GM12878 (cell line): ENCODE measurements at regions of chr2 and their contacts with region 1.

Region 1: GRCh38 chr2:136378712-136379595 is 261.0 kb upstream of the CXCR4 start:
- DNase-seq: no peak
- ATAC-seq: peak; percentile 55
- H3K4me3 ChIP-seq: no peak overlapping the region
- H3K27ac ChIP-seq: no peak overlapping the region
- H3K4me1 ChIP-seq: peaks cover 51% of the 10 kb centered on the region
- H3K27me3 ChIP-seq: no peaks in the 10 kb centered on the region
- CTCF ChIP-seq: peak; percentile 85 to 92 (median 86)
- EP300 ChIP-seq: no peak
- POLR2A ChIP-seq: no peak
- RAD21 ChIP-seq: peak; percentile 96

Region 2: GRCh38 chr2:135311268-135311667 is 1067.7 kb before region 1 on chr2:
- CTCF ChIA-PET with region 1: no interaction called
- POLR2A ChIA-PET with region 1: no interaction called
- RAD21 ChIA-PET with region 1: no interaction called
- SMC1A ChIA-PET with region 1: no interaction called
- in situ Hi-C with region 1: no loop called
- intact Hi-C with region 1: no loop called
- DNase-seq: no peak
- ATAC-seq: no peak
- H3K4me3 ChIP-seq: no peak overlapping the region
- H3K27ac ChIP-seq: no peak overlapping the region
- H3K4me1 ChIP-seq: no peaks in the 10 kb centered on the region
- H3K27me3 ChIP-seq: no peaks in the 10 kb centered on the region
- CTCF ChIP-seq: no peak
- EP300 ChIP-seq: no peak
- POLR2A ChIP-seq: no peak
- RAD21 ChIP-seq: no peak

Region 3: GRCh38 chr2:135913727-135914365 is 465.1 kb before region 1 on chr2:
- CTCF ChIA-PET with region 1: interaction called, 378 read pairs
- POLR2A ChIA-PET with region 1: interaction called, 7 read pairs
- RAD21 ChIA-PET with region 1: interaction called, 254 read pairs
- SMC1A ChIA-PET with region 1: interaction called, 348 read pairs
- in situ Hi-C with region 1: loop called (anchors 5 kb)
- intact Hi-C with region 1: loop called (anchors 1 kb)
- DNase-seq: no peak
- ATAC-seq: peak; percentile 75
- H3K4me3 ChIP-seq: no peak overlapping the region
- H3K27ac ChIP-seq: no peak overlapping the region
- H3K4me1 ChIP-seq: no peaks in the 10 kb centered on the region
- H3K27me3 ChIP-seq: no peaks in the 10 kb centered on the region
- CTCF ChIP-seq: peak; percentile 58 to 68 (median 63); a peak in 5 of 6 replicates
- EP300 ChIP-seq: no peak
- POLR2A ChIP-seq: no peak
- RAD21 ChIP-seq: peak; percentile 75

Region 4: DNA sequence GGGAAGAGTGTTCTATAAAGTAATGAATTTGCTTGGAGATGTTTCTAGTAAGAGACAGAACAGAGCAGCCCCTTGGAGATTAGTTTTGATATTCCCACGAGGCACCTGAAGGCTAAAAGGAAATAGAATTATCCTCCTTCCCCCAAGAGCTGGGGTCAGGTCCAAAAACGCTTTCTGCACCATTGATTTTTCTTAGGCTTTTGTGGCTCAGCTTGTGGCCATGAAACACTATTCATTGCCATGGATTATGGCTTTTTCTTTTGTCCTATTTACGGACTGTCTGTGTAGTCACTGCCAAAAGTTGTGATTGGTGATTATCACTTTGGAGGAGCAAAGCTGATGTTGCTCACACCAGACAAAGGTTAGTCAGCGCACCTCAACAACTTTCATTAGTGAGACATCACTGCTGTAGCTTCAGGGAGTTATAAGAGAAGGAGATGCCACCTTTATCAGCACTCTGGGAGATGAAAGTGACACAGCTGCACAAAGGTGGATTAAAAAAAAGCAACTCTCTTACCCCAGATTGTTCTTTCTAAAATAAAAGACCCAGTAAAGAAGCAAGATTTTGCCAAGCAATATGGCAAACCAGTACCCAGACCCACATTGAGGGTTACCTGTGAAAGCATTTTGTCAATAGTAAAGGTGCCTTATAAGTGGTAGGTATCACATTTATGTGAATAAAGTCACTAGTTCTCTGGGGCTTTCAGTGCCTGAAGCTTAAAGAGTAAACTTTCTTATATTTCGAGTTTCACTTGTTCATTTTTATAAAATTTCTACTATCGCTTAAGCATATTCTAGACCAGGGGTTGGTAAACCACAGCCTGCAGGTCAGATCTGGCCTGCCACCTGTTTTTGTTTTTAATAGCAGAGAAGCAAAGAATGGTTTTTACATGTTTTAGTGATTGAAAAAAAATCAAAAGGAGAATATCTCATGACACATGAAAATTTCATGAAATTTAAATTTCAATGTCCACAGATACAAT is 271.6 kb before region 1 on chr2:
- CTCF ChIA-PET with region 1: interaction called, 9 read pairs
- POLR2A ChIA-PET with region 1: no interaction called
- RAD21 ChIA-PET with region 1: interaction called, 9 read pairs
- SMC1A ChIA-PET with region 1: interaction called, 17 read pairs
- in situ Hi-C with region 1: no loop called
- intact Hi-C with region 1: no loop called
- DNase-seq: no peak
- ATAC-seq: peak; percentile 68
- H3K4me3 ChIP-seq: no peak overlapping the region
- H3K27ac ChIP-seq: no peak overlapping the region
- H3K4me1 ChIP-seq: peaks cover 15% of the 10 kb centered on the region; the same call in 1 of the 2 replicates
- H3K27me3 ChIP-seq: no peaks in the 10 kb centered on the region
- CTCF ChIP-seq: no peak
- EP300 ChIP-seq: peak in 1 of 2 experiments; percentile 59; a peak in 2 of 4 replicates
- POLR2A ChIP-seq: no peak
- RAD21 ChIP-seq: no peak

Region 5: GRCh38 chr2:136129601-136130000 is 249.4 kb before region 1 on chr2:
- CTCF ChIA-PET with region 1: interaction called, 17 read pairs
- POLR2A ChIA-PET with region 1: interaction called, 5 read pairs
- RAD21 ChIA-PET with region 1: interaction called, 148 read pairs
- SMC1A ChIA-PET with region 1: interaction called, 81 read pairs
- in situ Hi-C with region 1: loop called (anchors 5 kb)
- intact Hi-C with region 1: loop called (anchors 1 kb)
- DNase-seq: no peak
- ATAC-seq: no peak
- H3K4me3 ChIP-seq: no peak overlapping the region
- H3K27ac ChIP-seq: no peak overlapping the region
- H3K4me1 ChIP-seq: peaks cover 24% of the 10 kb centered on the region
- H3K27me3 ChIP-seq: peaks cover 0 to 9% of the 10 kb centered on the region in 2 experiments; a peak in 2 of 4 replicates
- CTCF ChIP-seq: no peak
- EP300 ChIP-seq: peak in 1 of 2 experiments; percentile 73; a peak in 2 of 4 replicates
- POLR2A ChIP-seq: no peak
- RAD21 ChIP-seq: no peak

Region 6: DNA sequence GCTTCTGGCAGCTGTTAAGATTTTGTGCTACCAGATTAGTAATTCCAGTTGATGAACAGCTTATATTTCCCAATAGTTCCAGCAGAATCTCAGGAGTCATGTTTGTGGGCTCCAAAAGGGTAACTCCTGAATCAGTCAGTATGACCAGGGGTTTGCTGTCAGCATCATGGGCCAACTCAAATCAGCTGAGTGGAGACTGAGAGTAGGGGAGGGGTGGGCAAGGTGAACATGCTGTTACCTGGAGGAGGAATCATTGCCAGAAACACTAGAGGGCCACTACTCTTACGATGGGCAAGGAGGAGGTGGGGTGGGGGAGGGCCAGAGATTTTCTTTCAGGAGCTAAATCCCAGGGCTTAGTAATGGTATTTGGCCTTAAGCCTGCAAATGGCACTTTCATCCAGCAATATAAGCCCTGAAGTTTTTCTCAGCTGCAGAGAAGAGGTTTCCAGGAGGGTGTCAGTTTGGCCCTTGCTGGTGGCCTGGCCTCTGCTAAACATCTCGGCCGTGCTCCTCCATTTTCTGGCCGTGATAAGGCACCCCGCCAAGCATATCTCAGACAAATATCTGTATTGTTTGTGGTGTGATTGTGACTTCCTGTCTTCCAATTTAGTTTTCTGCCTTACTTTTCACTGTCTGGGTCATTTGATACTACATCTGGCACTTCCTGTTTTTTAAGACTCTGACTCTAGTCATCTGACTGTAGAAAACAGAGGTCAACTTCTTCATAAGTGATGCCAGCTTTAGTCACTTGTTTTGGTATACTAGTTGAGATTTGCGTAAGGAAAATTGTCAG is 140.5 kb before region 1 on chr2:
- CTCF ChIA-PET with region 1: interaction called, 6 read pairs
- POLR2A ChIA-PET with region 1: interaction called, 4 read pairs
- RAD21 ChIA-PET with region 1: interaction called, 27 read pairs
- SMC1A ChIA-PET with region 1: interaction called, 26 read pairs
- in situ Hi-C with region 1: no loop called
- intact Hi-C with region 1: no loop called
- DNase-seq: peak; percentile 78
- ATAC-seq: peak; percentile 89
- H3K4me3 ChIP-seq: no peak overlapping the region
- H3K27ac ChIP-seq: no peak overlapping the region
- H3K4me1 ChIP-seq: peaks cover 18% of the 10 kb centered on the region
- H3K27me3 ChIP-seq: no peaks in the 10 kb centered on the region
- CTCF ChIP-seq: no peak
- EP300 ChIP-seq: peak; percentile 97 to 99
- POLR2A ChIP-seq: no peak
- RAD21 ChIP-seq: no peak

Region 7: DNA sequence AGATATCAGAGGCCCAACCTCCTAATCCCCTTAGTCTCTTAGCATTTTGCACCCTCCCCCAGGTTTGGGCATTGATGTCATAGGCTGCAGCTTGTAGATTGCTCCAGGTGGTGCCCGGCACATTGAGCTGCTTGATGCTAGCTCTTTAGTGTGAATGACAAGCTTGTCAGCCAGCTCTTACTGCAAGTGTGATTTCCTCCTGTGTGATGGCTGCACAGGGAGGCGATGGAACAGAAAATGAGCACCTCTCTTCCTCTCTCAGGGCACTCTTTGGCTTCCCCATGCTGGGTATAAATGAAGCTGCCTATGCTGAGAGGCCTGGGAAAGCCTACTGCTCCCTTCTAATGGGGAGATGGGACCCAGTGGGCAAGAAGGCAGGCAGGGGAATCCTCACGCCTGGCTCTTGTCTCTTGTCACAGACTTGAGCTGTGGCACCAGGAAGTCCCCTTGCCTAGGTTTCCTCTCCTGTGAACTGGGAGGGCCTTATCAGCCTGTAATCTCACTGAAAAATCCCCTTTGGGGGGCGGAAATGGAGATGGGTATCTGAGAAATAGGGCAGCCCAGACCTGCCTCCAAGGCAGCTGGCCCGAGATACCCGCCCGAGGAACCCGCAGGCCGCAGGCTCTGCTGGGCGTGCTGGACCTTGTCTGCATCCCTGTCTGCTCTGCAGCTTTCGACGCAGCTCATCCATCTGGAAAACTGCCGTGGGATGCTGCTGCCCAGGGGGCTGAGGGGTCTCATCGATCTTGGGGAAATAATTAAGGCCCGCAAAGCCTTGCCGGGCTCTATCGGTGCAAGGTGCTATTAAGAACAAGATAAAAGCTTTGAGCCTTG is 97.5 kb before region 1 on chr2:
- CTCF ChIA-PET with region 1: interaction called, 5 read pairs
- POLR2A ChIA-PET with region 1: interaction called, 6 read pairs
- RAD21 ChIA-PET with region 1: interaction called, 23 read pairs
- SMC1A ChIA-PET with region 1: interaction called, 11 read pairs
- in situ Hi-C with region 1: no loop called
- intact Hi-C with region 1: no loop called
- DNase-seq: peak; percentile 25
- ATAC-seq: peak; percentile 85
- H3K4me3 ChIP-seq: no peak overlapping the region
- H3K27ac ChIP-seq: no peak overlapping the region
- H3K4me1 ChIP-seq: peaks cover 22% of the 10 kb centered on the region
- H3K27me3 ChIP-seq: no peaks in the 10 kb centered on the region; a peak in 1 of 4 replicates
- CTCF ChIP-seq: no peak
- EP300 ChIP-seq: no peak
- POLR2A ChIP-seq: no peak
- RAD21 ChIP-seq: no peak

Region 8: GRCh38 chr2:136327162-136327852 is 51.6 kb before region 1 on chr2:
- CTCF ChIA-PET with region 1: interaction called, 13 read pairs
- POLR2A ChIA-PET with region 1: interaction called, 10 read pairs
- RAD21 ChIA-PET with region 1: interaction called, 63 read pairs
- SMC1A ChIA-PET with region 1: interaction called, 48 read pairs
- in situ Hi-C with region 1: no loop called
- intact Hi-C with region 1: loop called (anchors 1 kb)
- DNase-seq: peak; percentile 71
- ATAC-seq: peak; percentile 89
- H3K4me3 ChIP-seq: peak overlapping the region; percentile 37; the same call in 1 of the 2 replicates
- H3K27ac ChIP-seq: no peak overlapping the region
- H3K4me1 ChIP-seq: peaks cover 26% of the 10 kb centered on the region
- H3K27me3 ChIP-seq: 0 out of 4 replicates have a peak, but pooled peaks cover 0 to 2% of the 10 kb centered on the region in 2 experiments
- CTCF ChIP-seq: no peak
- EP300 ChIP-seq: peak; percentile 95 to 96; a peak in 3 of 4 replicates
- POLR2A ChIP-seq: no peak
- RAD21 ChIP-seq: no peak